CD8-positive, alpha-beta memory T cell (primary cell): ENCODE measurements at regions of chr12 and their contacts with region 1.

Region 1: GRCh38 chr12:53344824-53345485 is 8.8 kb upstream of the SP7 start:
- DNase-seq: peak; percentile 53 to 80 (median 61)
- H3K4me3 ChIP-seq: peak overlapping the region; percentile 80
- H3K4me3 Mint-ChIP-seq: peak overlapping the region; percentile 90 to 98 (median 95)
- H3K27ac ChIP-seq: peak overlapping the region; percentile 4
- H3K27ac Mint-ChIP-seq: peak overlapping the region in 7 of 8 donors; percentile 75 to 95 (median 92)
- H3K4me1 ChIP-seq: peaks cover 9% of the 10 kb centered on the region
- H3K4me1 Mint-ChIP-seq: peaks cover 12 to 18% (median 14%) of the 10 kb centered on the region in 3 donors
- H3K27me3 ChIP-seq: no peaks in the 10 kb centered on the region
- H3K27me3 Mint-ChIP-seq: peaks cover 6 to 7% of the 10 kb centered on the region in 2 donors

Region 2: GRCh38 chr12:53287741-53288216 is 57.2 kb before region 1 on chr12:
- CTCF ChIA-PET with region 1: interaction called, 15 read pairs
- POLR2A ChIA-PET with region 1: no interaction called
- DNase-seq: peak; percentile 57 to 84 (median 63)
- H3K4me3 ChIP-seq: no peak overlapping the region
- H3K4me3 Mint-ChIP-seq: no peak overlapping the region
- H3K27ac ChIP-seq: no peak overlapping the region
- H3K27ac Mint-ChIP-seq: peak overlapping the region in 4 of 8 donors; percentile 37 to 78 (median 70)
- H3K4me1 ChIP-seq: no peaks in the 10 kb centered on the region
- H3K4me1 Mint-ChIP-seq: peaks cover 4 to 5% (median 5%) of the 10 kb centered on the region in 3 donors
- H3K27me3 ChIP-seq: no peaks in the 10 kb centered on the region
- H3K27me3 Mint-ChIP-seq: no peaks in the 10 kb centered on the region

Region 3: DNA sequence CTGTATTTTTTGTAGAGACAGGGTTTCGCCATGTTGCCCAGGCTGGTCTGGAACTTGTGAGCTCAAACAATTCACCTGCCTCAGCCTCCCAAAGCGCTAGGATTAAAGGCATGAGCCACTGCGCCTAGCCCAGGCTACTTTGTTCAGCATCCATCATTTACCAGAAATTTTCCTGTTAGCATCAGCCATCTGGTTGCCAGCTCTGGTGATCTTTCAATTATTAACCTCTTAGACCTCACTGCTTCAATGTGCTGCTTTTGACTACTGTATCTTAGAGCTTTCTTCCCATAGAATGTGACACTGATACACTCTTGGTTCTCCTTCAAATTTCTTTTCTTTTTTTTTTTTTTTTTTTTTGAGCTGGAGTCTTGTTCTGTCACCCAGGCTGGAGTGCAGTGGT is 73.3 kb after region 1 on chr12:
- CTCF ChIA-PET with region 1: interaction called, 121 read pairs
- POLR2A ChIA-PET with region 1: interaction called, 6 read pairs
- DNase-seq: no peak
- H3K4me3 ChIP-seq: no peak overlapping the region
- H3K4me3 Mint-ChIP-seq: no peak overlapping the region
- H3K27ac ChIP-seq: no peak overlapping the region
- H3K27ac Mint-ChIP-seq: no peak overlapping the region
- H3K4me1 ChIP-seq: peaks cover 4% of the 10 kb centered on the region
- H3K4me1 Mint-ChIP-seq: peaks cover 10 to 21% (median 14%) of the 10 kb centered on the region in 3 donors
- H3K27me3 ChIP-seq: no peaks in the 10 kb centered on the region
- H3K27me3 Mint-ChIP-seq: no peaks in the 10 kb centered on the region

Region 4: GRCh38 chr12:53427905-53428594 is 83.1 kb after region 1 on chr12:
- CTCF ChIA-PET with region 1: interaction called, 121 read pairs
- POLR2A ChIA-PET with region 1: interaction called, 3 read pairs
- DNase-seq: no peak
- H3K4me3 ChIP-seq: no peak overlapping the region
- H3K4me3 Mint-ChIP-seq: no peak overlapping the region
- H3K27ac ChIP-seq: no peak overlapping the region
- H3K27ac Mint-ChIP-seq: peak overlapping the region in 2 of 8 donors; percentile 15 to 19
- H3K4me1 ChIP-seq: no peaks in the 10 kb centered on the region
- H3K4me1 Mint-ChIP-seq: no peaks in the 10 kb centered on the region
- H3K27me3 ChIP-seq: no peaks in the 10 kb centered on the region
- H3K27me3 Mint-ChIP-seq: no peaks in the 10 kb centered on the region